MCF 10A (cell line): ENCODE measurements at regions of chr2 and their contacts with region 1.

Region 1: GRCh38 chr2:66346231-66346664 is 88.7 kb upstream of the MEIS1 start:
- DNase-seq: no peak
- H3K4me3 Mint-ChIP-seq: no peak overlapping the region
- H3K27ac Mint-ChIP-seq: no peak overlapping the region
- H3K4me1 Mint-ChIP-seq: no peaks in the 10 kb centered on the region
- H3K27me3 Mint-ChIP-seq: no peaks in the 10 kb centered on the region
- CTCF ChIP-seq: no peak

Region 2: GRCh38 chr2:66268756-66269155 is 77.5 kb before region 1 on chr2:
- CTCF ChIA-PET with region 1: no interaction called
- POLR2A ChIA-PET with region 1: no interaction called
- intact Hi-C with region 1: loop called (anchors 10 kb)
- DNase-seq: no peak
- H3K4me3 Mint-ChIP-seq: no peak overlapping the region
- H3K27ac Mint-ChIP-seq: no peak overlapping the region
- H3K4me1 Mint-ChIP-seq: peaks cover 6% of the 10 kb centered on the region
- H3K27me3 Mint-ChIP-seq: no peaks in the 10 kb centered on the region
- CTCF ChIP-seq: no peak